ENCODE measurements at regions of chr20 and their contacts with region 1.

Region 1: GRCh38 chr20:9978397-9979004 is 56.3 kb upstream of the ANKEF1 start:
- DNase-seq: peak; percentile 26
- H3K4me3 Mint-ChIP-seq: no peak overlapping the region
- H3K27ac Mint-ChIP-seq: no peak overlapping the region
- H3K4me1 Mint-ChIP-seq: peaks cover 7% of the 10 kb centered on the region
- H3K27me3 Mint-ChIP-seq: peaks cover 7% of the 10 kb centered on the region

Region 2: DNA sequence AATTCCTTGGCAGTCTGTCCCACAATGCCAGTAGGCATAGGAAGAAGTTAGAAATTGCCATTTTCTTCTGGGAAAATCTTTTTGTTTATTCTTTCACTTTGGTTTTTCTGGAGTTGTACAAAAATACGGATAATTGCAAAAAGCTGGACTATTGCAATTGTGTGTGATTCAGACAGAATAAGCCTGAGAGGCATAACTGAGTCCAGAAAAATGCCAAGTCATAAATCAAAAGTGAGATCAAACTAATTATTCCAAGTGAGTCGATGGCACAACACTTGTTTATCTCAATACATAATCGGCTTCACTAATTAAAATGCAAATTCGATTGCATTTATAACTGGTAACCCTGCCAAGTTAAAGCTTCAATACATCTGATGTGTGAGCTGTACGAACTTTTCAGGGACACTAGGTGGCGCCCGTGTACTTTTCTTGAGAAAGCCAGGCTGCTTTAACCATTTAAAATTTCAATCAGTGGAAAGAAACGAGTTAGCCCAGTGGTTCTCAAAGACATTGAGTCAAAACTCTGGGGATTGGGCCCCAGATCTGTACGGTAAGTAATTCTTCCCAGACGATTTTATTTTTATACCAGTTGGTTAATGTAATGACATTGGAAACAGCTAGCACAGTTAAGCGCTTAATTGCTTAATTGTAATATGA is 361.5 kb before region 1 on chr20:
- intact Hi-C with region 1: loop called (anchors 5 kb)
- DNase-seq: peak; percentile 6
- H3K4me3 Mint-ChIP-seq: no peak overlapping the region
- H3K27ac Mint-ChIP-seq: no peak overlapping the region
- H3K4me1 Mint-ChIP-seq: no peaks in the 10 kb centered on the region
- H3K27me3 Mint-ChIP-seq: no peaks in the 10 kb centered on the region

Region 3: DNA sequence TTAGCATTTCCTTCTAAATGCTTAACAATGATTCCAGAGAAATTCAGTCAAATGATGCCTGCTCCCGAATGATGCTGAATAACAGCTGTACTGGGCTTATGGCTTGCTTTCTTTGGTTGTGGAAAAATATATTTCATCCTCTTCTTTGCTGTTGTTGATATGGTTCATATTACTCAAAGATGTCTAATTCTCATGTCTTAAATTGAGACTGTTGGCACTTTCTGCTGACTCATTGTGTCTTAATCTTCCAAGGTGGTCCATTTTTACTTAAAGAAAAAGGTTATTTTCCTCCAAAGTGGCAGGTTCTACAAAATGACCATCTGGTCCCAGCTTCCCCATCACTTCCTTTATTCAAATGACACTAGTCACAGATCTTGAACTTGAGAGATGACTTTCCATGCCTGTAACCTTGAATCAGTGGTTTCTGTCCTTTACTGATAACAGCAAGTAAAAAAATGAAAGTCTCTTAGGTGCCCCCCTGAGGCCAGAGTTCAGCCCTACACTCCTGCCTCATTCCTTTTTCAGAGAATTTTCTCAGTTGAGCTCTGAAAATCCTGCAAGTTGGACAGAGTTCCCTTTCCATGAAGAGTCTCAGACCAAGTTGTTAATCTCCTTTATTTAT is 247.0 kb after region 1 on chr20:
- intact Hi-C with region 1: loop called (anchors 2 kb)
- DNase-seq: no peak
- H3K4me3 Mint-ChIP-seq: no peak overlapping the region
- H3K27ac Mint-ChIP-seq: no peak overlapping the region
- H3K4me1 Mint-ChIP-seq: no peaks in the 10 kb centered on the region
- H3K27me3 Mint-ChIP-seq: peaks cover 1% of the 10 kb centered on the region

Region 4: DNA sequence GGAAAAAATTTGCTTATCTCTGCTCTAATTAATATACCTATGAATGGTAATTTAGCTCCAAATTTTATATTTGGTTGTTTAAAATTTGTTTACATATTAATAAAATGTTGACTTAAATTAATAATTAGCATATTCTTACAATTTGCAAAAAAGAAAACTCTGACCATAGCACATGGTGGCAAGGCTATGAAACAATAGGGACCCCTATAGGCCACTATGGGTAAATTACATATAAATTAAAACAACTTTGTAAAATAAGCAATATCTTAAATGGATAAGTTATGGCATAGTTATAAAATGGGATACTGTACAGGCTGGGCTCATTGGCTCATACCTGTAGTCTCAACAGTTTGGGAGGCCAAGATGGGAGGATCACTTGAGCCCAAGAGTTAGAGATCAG is 379.5 kb after region 1 on chr20:
- intact Hi-C with region 1: loop called (anchors 1 kb)
- DNase-seq: no peak
- H3K4me3 Mint-ChIP-seq: no peak overlapping the region
- H3K27ac Mint-ChIP-seq: no peak overlapping the region
- H3K4me1 Mint-ChIP-seq: peaks cover 6% of the 10 kb centered on the region
- H3K27me3 Mint-ChIP-seq: peaks cover 9% of the 10 kb centered on the region

Region 5: GRCh38 chr20:10434832-10435812 is 456.6 kb after region 1 on chr20 and contains the start of gene SLX4IP:
- intact Hi-C with region 1: loop called (anchors 2 kb)
- DNase-seq: peak; percentile 77
- H3K4me3 Mint-ChIP-seq: peak within 1 kb of the TSS; percentile 94
- H3K27ac Mint-ChIP-seq: peak within 1 kb of the TSS; percentile 97
- H3K4me1 Mint-ChIP-seq: peaks cover 28% of the 10 kb centered on the region
- H3K27me3 Mint-ChIP-seq: no peaks in the 10 kb centered on the region
- total RNA-seq, gene SLX4IP: 5.0 and 5.8 TPM in 2 replicates

Region 6: GRCh38 chr20:10673988-10674711 is 695.6 kb after region 1 on chr20 and contains the start of gene JAG1:
- intact Hi-C with region 1: loop called (anchors 10 kb)
- DNase-seq: peak; percentile 71
- H3K4me3 Mint-ChIP-seq: peak within 1 kb of the TSS; percentile 89
- H3K27ac Mint-ChIP-seq: peak within 1 kb of the TSS; percentile 92
- H3K4me1 Mint-ChIP-seq: peaks cover 26% of the 10 kb centered on the region
- H3K27me3 Mint-ChIP-seq: peaks cover 64% of the 10 kb centered on the region
- total RNA-seq, gene JAG1: 1.3 and 1.4 TPM in 2 replicates